MCF 10A (cell line): ENCODE measurements at regions of chr1 and their contacts with region 1.

Region 1: DNA sequence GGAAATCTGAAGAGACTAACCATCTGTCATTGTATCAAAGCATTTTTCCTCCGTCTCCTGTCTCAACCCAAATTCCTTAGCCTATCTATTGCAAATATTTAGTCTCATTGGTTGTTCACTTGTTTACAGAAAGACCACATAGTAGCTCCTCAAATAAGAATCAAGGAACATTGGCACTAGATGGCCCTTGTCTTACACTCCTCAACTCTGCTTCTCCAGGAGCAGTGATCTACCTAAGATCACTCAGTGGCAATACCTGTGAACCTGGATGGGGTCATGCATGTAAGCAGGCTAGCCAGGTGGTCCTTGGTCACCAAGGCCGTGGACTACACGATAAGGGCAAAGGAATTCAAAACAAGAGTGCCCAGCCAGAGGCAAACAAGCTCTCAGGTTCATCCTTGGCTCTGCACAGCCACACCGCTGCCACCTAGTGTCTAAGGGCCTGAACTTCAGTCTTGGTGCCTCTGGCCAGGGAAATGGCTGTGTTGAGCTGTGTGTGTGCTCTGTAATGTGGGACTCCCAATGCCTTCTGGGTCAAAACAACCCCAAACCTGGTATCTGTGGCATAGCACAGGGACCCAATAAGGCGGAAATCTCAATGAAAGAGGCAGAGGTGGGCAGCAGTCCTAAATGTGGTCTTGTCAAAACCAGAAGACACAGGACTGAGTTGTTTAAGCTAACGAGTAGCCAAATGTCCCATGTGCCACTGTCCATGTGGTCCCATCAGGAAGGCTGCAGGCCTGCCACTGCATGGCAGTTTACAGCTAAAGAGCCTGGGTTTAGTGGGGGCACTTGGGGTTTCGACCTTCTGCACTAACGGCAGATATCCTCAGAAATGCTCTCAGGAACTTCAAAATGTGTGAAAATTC is 54.5 kb downstream of the GPR161 start:
- DNase-seq: peak; percentile 88
- H3K4me3 Mint-ChIP-seq: no peak overlapping the region
- H3K27ac Mint-ChIP-seq: peak overlapping the region; percentile 82
- H3K4me1 Mint-ChIP-seq: peaks cover 28% of the 10 kb centered on the region
- H3K27me3 Mint-ChIP-seq: no peaks in the 10 kb centered on the region
- CTCF ChIP-seq: peak; percentile 95

Region 2: GRCh38 chr1:167803358-167804207 is 278.7 kb before region 1 on chr1:
- CTCF ChIA-PET with region 1: interaction called, 7 read pairs
- POLR2A ChIA-PET with region 1: no interaction called
- intact Hi-C with region 1: loop called (anchors 1 kb)
- DNase-seq: peak; percentile 95
- H3K4me3 Mint-ChIP-seq: peak overlapping the region; percentile 3
- H3K27ac Mint-ChIP-seq: no peak overlapping the region
- H3K4me1 Mint-ChIP-seq: peaks cover 43% of the 10 kb centered on the region
- H3K27me3 Mint-ChIP-seq: no peaks in the 10 kb centered on the region
- CTCF ChIP-seq: peak; percentile 97

Region 3: DNA sequence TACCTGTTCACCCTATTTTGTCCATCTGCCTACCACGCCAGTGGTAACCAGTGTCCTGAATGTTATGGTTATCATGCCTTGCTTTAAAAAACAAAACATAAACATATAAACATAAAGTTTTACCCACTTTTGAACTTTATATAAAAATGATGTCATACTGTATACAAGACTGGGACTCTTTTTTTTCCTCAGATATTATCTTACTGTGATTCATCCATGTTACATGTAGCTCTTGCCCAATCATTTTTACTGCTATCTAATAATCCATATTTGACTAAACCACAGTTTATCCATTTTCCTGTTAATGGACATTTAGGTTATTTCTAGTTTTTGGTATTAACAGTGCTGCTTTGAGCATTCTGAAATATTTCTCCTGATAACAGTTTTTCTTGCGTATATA is 24.3 kb before region 1 on chr1:
- CTCF ChIA-PET with region 1: interaction called, 18 read pairs
- POLR2A ChIA-PET with region 1: interaction called, 4 read pairs
- intact Hi-C with region 1: no loop called
- DNase-seq: no peak
- H3K4me3 Mint-ChIP-seq: no peak overlapping the region
- H3K27ac Mint-ChIP-seq: no peak overlapping the region
- H3K4me1 Mint-ChIP-seq: peaks cover 6% of the 10 kb centered on the region
- H3K27me3 Mint-ChIP-seq: no peaks in the 10 kb centered on the region
- CTCF ChIP-seq: no peak

Region 4: GRCh38 chr1:168106274-168106673 is 24.0 kb after region 1 on chr1:
- CTCF ChIA-PET with region 1: interaction called, 37 read pairs
- POLR2A ChIA-PET with region 1: interaction called, 4 read pairs
- intact Hi-C with region 1: no loop called
- DNase-seq: no peak
- H3K4me3 Mint-ChIP-seq: no peak overlapping the region
- H3K27ac Mint-ChIP-seq: no peak overlapping the region
- H3K4me1 Mint-ChIP-seq: peaks cover 7% of the 10 kb centered on the region
- H3K27me3 Mint-ChIP-seq: no peaks in the 10 kb centered on the region
- CTCF ChIP-seq: no peak

Region 5: DNA sequence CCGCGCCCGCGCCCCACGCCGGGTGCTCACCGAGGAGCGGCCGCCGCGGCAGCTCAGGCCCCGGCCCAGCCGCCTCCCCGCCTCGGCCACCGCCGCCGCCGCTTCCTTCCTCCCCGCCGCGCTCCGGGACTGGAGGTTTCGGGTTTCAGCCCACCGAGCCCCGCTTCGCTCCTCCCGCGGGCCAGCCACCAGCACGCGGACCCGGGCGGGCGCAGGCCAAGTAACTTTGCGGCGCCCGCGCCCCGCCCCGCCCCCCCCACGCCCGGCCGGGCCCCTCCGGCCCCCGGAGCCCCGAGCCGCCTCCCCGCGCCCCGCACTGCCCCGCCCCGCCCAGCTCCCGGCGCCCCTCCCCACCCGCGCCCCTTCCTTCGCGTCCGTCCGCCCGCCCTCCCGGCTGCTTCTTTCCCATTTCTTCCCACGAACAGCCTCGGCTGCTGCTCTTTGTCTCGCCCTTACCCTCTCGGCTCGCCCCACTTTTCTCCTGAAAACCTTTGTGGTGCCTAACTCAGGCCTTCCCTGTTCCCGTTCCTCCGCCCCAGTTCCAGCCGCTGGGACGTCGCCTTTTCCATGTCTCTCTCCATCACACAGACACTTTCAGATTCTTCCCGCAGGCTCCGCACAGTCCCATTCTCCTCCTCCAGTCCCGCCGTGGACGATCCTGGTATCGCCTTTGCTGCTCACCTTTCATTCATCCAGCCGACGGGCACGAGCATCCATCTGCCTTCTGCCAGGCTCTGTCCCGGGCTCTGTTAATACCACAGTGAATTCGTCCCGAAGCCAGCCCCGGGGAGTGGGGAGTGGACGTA is 54.7 kb after region 1 on chr1 and contains the start of gene GPR161:
- CTCF ChIA-PET with region 1: interaction called, 14 read pairs
- POLR2A ChIA-PET with region 1: interaction called, 5 read pairs
- intact Hi-C with region 1: no loop called
- DNase-seq: peak; percentile 65
- H3K4me3 Mint-ChIP-seq: peak within 1 kb of the TSS; percentile 87
- H3K27ac Mint-ChIP-seq: peak within 1 kb of the TSS; percentile 4
- H3K4me1 Mint-ChIP-seq: peaks cover 15% of the 10 kb centered on the region
- H3K27me3 Mint-ChIP-seq: no peaks in the 10 kb centered on the region
- CTCF ChIP-seq: no peak
- total RNA-seq, gene GPR161: 6.6 and 10.2 TPM in 2 replicates

Region 6: DNA sequence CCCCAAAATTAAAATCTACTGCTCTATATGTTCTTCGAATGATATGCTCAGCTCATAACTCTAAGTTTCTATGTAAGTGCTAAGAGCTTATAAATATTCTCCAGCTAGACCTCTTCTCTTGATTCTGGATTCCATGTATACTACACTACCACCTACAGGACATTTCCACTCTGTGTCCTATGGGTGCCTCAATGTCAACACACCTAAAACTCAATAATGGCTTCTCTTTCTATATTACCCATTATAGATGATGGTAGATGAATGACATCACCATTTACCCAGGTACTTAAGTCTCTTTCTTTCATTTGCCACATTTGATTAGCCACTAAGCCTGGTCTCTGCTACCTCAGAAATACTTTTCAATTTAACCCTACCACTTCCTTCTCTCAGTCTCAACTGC is 239.7 kb after region 1 on chr1:
- CTCF ChIA-PET with region 1: interaction called, 10 read pairs
- POLR2A ChIA-PET with region 1: no interaction called
- intact Hi-C with region 1: loop called (anchors 2 kb)
- DNase-seq: peak; percentile 76
- H3K4me3 Mint-ChIP-seq: no peak overlapping the region
- H3K27ac Mint-ChIP-seq: no peak overlapping the region
- H3K4me1 Mint-ChIP-seq: peaks cover 13% of the 10 kb centered on the region
- H3K27me3 Mint-ChIP-seq: no peaks in the 10 kb centered on the region
- CTCF ChIP-seq: peak; percentile 52